Caco-2 (cell line): ENCODE measurements at regions of chr5 and their contacts with region 1.

Region 1: GRCh38 chr5:31232273-31232888 is 38.9 kb downstream of the CDH6 start:
- DNase-seq: peak; percentile 44 to 71
- H3K4me3 ChIP-seq: no peak overlapping the region
- H3K4me3 Mint-ChIP-seq: no peak overlapping the region
- H3K27ac Mint-ChIP-seq: peak overlapping the region; percentile 13
- H3K4me1 ChIP-seq: peaks cover 5% of the 10 kb centered on the region
- H3K4me1 Mint-ChIP-seq: peaks cover 13% of the 10 kb centered on the region
- H3K27me3 ChIP-seq: no peaks in the 10 kb centered on the region
- H3K27me3 Mint-ChIP-seq: no peaks in the 10 kb centered on the region
- CTCF ChIP-seq: peak; percentile 62 to 79

Region 2: DNA sequence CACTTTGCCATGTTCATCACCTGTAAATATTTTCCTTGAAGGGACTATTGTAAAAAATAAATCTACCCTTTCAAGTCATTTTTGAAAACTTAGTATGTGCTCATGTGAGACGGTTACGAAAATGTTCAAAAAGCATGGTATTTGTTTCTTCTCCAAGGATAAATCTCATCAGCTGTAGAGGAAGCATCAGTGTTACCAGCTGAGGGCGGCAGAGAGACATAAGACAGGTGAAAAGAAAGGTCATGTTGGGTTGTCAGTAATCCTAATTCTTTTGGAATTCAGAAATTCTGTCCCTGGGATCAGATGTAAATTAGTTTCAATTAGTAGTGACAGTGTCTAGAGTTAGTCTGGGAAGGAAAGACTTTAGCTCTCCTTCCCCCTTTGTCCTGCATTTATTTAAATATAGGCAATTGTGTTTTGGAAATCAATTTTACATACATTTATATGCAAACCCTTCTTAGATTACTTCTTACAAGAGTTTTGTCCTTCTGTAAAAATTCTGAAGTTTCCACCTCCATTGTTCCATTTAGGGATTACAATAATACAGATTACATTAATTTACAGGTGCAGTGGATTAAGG is 830.8 kb before region 1 on chr5:
- CTCF ChIA-PET with region 1: no interaction called
- POLR2A ChIA-PET with region 1: no interaction called
- intact Hi-C with region 1: loop called (anchors 1 kb)
- DNase-seq: peak; percentile 69
- H3K4me3 ChIP-seq: no peak overlapping the region
- H3K4me3 Mint-ChIP-seq: no peak overlapping the region
- H3K27ac Mint-ChIP-seq: no peak overlapping the region
- H3K4me1 ChIP-seq: no peaks in the 10 kb centered on the region
- H3K4me1 Mint-ChIP-seq: no peaks in the 10 kb centered on the region
- H3K27me3 ChIP-seq: no peaks in the 10 kb centered on the region
- H3K27me3 Mint-ChIP-seq: no peaks in the 10 kb centered on the region
- CTCF ChIP-seq: peak; percentile 64 to 82

Region 3: DNA sequence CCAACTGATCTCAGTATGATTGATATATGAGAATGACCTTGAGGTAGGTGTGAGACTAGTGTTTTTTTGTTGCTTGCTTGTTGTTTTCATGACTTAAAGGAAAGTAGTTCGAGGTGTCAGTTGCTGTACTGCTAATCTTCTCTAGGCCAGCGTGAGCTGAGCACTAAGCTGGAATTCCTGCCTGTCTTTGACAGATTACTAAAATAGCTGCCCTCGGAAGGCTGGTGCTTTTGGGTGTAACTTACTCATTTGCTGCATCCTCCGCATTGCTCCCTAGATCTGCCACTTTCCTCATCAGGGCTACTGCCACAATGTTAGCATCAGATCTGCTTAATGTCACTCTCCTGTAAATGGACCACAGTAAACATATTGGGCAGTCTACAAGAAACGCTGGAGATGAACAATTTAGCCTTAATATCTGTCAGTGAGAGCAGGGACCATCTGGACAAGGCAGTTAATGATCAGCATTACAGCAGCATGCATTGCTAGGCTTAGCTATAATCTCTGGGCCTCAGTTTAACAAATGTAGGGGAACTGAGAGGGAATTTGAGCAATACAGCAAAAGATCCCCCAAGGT is 145.5 kb before region 1 on chr5:
- CTCF ChIA-PET with region 1: no interaction called
- POLR2A ChIA-PET with region 1: no interaction called
- intact Hi-C with region 1: no loop called
- DNase-seq: no peak
- H3K4me3 ChIP-seq: no peak overlapping the region
- H3K4me3 Mint-ChIP-seq: no peak overlapping the region
- H3K27ac Mint-ChIP-seq: no peak overlapping the region
- H3K4me1 ChIP-seq: no peaks in the 10 kb centered on the region
- H3K4me1 Mint-ChIP-seq: peaks cover 4% of the 10 kb centered on the region
- H3K27me3 ChIP-seq: no peaks in the 10 kb centered on the region
- H3K27me3 Mint-ChIP-seq: no peaks in the 10 kb centered on the region
- CTCF ChIP-seq: no peak

Region 4: GRCh38 chr5:31119938-31120641 is 112.3 kb before region 1 on chr5:
- CTCF ChIA-PET with region 1: no interaction called
- POLR2A ChIA-PET with region 1: no interaction called
- intact Hi-C with region 1: loop called (anchors 5 kb)
- DNase-seq: no peak
- H3K4me3 ChIP-seq: no peak overlapping the region
- H3K4me3 Mint-ChIP-seq: no peak overlapping the region
- H3K27ac Mint-ChIP-seq: no peak overlapping the region
- H3K4me1 ChIP-seq: peaks cover 25% of the 10 kb centered on the region
- H3K4me1 Mint-ChIP-seq: peaks cover 29% of the 10 kb centered on the region
- H3K27me3 ChIP-seq: no peaks in the 10 kb centered on the region
- H3K27me3 Mint-ChIP-seq: no peaks in the 10 kb centered on the region
- CTCF ChIP-seq: no peak

Region 5: DNA sequence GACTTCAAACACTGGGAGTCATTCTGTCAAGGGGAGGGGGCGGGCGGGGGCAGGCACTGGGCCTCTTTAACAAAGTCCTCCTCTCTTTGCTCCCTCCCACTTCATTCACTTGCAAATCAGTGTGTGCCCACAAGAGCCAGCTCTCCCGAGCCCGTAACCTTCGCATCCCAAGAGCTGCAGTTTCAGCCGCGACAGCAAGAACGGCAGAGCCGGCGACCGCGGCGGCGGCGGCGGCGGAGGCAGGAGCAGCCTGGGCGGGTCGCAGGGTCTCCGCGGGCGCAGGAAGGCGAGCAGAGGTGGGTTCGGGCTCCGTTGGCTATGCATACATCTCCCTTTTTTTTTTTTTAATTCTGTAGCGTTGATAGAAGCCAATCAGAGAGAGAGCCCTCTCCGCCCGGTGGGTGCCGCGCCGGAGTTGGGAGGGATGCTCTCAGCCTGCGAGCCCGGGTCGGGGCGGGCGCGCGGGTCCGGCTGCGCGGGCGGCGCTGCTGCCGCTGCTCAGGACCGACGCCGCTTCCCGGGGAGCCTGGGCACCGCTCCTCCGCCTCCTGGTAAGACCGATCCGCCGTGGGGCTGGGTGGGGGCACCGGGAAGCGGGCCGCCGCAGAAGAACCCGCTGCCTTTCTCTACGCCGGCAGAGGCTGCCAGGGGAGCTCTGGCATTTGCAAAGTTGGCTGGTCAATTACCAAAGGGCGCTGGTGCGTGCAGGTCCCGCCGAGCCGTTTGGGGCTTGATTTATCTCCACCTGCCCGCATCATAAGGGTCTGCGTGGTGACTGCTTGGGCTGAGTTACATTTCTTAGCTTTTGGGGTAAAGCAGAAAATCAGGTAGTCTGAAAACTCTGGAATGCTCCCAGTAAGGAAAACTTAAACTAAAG is 38.6 kb before region 1 on chr5 and contains the start of gene CDH6:
- CTCF ChIA-PET with region 1: interaction called, 6 read pairs
- POLR2A ChIA-PET with region 1: no interaction called
- intact Hi-C with region 1: loop called (anchors 1 kb)
- DNase-seq: peak; percentile 70 to 75
- H3K4me3 ChIP-seq: peak within 1 kb of the TSS; percentile 61
- H3K4me3 Mint-ChIP-seq: peak within 1 kb of the TSS; percentile 74
- H3K27ac Mint-ChIP-seq: peak within 1 kb of the TSS; percentile 19
- H3K4me1 ChIP-seq: peaks cover 17% of the 10 kb centered on the region
- H3K4me1 Mint-ChIP-seq: peaks cover 41% of the 10 kb centered on the region
- H3K27me3 ChIP-seq: no peaks in the 10 kb centered on the region
- H3K27me3 Mint-ChIP-seq: no peaks in the 10 kb centered on the region
- CTCF ChIP-seq: no peak
- total RNA-seq, gene CDH6: 16.0 and 18.0 TPM in 2 replicates

Region 6: DNA sequence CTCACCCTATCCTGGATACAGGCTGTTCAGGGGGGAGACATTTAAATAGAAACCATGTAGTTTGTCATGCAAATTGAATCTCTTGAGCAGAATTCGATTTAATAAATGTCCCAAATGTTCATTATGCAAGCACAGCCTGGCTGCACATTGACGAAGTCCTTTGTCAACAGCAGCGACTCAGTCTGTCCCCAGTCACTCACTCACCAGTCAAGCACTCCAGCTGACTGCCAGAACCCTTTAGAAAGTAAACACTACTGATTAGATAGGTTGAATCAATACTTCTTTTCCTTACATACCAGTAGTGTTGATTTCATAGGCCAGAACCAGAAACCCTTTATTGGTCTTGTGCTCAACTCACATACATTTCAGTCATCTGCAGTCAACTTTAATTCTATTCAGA is 11.4 kb before region 1 on chr5:
- CTCF ChIA-PET with region 1: interaction called, 10 read pairs
- POLR2A ChIA-PET with region 1: no interaction called
- intact Hi-C with region 1: loop called (anchors 1 kb)
- DNase-seq: peak; percentile 70 to 81
- H3K4me3 ChIP-seq: no peak overlapping the region
- H3K4me3 Mint-ChIP-seq: peak overlapping the region; percentile 36
- H3K27ac Mint-ChIP-seq: peak overlapping the region; percentile 80
- H3K4me1 ChIP-seq: peaks cover 65% of the 10 kb centered on the region
- H3K4me1 Mint-ChIP-seq: peaks cover 37% of the 10 kb centered on the region
- H3K27me3 ChIP-seq: no peaks in the 10 kb centered on the region
- H3K27me3 Mint-ChIP-seq: no peaks in the 10 kb centered on the region
- CTCF ChIP-seq: no peak

Region 7: DNA sequence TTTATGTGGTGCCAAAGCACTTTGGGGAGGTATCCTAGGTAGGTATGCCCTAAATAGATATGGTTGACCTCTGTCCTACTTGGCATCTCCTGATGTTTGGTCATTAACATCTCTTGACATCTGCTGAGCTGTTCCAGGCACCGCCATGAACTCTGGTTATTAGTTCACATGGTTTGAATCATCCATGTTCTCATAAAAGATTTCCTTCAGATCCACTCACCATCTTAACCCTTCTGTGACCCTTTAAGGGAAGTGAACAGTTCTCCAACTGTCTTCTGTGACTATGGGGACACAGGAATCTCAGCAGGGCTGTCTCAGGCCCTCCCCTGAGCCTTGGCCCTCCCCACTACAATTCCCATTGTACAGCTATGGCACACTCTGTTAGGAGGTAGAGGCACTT is 128.9 kb after region 1 on chr5:
- CTCF ChIA-PET with region 1: no interaction called
- POLR2A ChIA-PET with region 1: no interaction called
- intact Hi-C with region 1: loop called (anchors 1 kb)
- DNase-seq: no peak
- H3K4me3 ChIP-seq: no peak overlapping the region
- H3K4me3 Mint-ChIP-seq: no peak overlapping the region
- H3K27ac Mint-ChIP-seq: no peak overlapping the region
- H3K4me1 ChIP-seq: no peaks in the 10 kb centered on the region
- H3K4me1 Mint-ChIP-seq: no peaks in the 10 kb centered on the region
- H3K27me3 ChIP-seq: no peaks in the 10 kb centered on the region
- H3K27me3 Mint-ChIP-seq: peaks cover 5% of the 10 kb centered on the region
- CTCF ChIP-seq: no peak